A549 (cell line): ENCODE measurements at regions of chr9 and their contacts with region 1.

Region 1: DNA sequence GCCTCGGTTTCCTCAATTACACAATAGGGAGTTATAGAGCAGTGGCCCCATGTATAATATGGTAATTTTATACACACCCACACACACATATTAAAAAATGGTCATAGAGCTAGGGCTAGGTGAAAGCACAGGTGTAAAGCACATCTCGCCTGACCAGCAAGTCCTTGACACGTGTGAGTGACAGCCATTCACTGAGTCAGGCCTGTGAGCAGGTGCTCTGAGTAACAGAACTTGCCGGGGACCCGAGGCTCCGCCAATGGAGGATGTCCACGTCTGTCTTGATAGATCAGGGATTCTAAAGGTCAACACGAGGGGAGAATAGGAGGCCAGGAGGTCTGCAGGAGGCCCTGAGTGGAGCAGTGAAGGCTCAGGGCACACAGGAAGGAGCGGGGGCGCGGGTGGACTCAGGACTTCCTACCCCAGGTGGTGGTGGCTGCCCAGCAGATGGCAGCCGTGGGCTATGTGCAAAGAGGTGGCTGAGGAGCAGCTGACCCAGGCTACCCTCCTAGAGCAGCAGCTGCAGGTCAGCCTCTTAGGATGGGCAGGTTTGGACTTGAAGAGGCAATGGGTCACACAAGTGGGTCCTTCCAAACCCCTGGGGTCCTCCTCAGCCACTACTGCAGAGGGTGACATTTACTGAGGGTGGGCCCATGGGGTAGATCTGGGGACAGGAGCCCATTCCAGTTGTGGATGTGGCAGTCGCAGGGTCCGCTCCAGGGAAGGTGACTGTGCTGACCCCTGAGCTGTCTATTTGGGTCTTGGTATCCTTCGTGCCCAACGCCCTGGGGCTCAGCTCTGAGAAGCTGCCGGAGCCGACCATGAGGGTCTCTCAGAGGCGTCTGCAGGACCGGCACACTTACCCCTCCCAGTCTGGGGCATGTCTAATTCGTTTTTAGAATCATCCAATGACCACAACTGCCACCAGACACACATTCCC is 45.9 kb downstream of the PRRT1B start:
- DNase-seq: peak; percentile 77 to 80
- ATAC-seq: peak; percentile 90 to 96
- H3K4me3 ChIP-seq: no peak overlapping the region
- H3K27ac ChIP-seq: no peak overlapping the region
- H3K4me1 ChIP-seq: peaks cover 22% of the 10 kb centered on the region
- CTCF ChIP-seq: peak; percentile 91
- EP300 ChIP-seq: no peak
- POLR2A ChIP-seq: no peak
- RAD21 ChIP-seq: peak; percentile 98 to 99

Region 2: GRCh38 chr9:131603199-131603598 is 12.0 kb after region 1 on chr9:
- CTCF ChIA-PET with region 1: interaction called, 60 read pairs
- POLR2A ChIA-PET with region 1: no interaction called
- DNase-seq: no peak
- ATAC-seq: no peak
- H3K4me3 ChIP-seq: no peak overlapping the region
- H3K27ac ChIP-seq: no peak overlapping the region
- H3K4me1 ChIP-seq: peaks cover 26% of the 10 kb centered on the region
- CTCF ChIP-seq: no peak
- EP300 ChIP-seq: no peak
- POLR2A ChIP-seq: no peak
- RAD21 ChIP-seq: no peak

Region 3: GRCh38 chr9:131635285-131635684 is 44.1 kb after region 1 on chr9:
- CTCF ChIA-PET with region 1: interaction called, 13 read pairs
- POLR2A ChIA-PET with region 1: no interaction called
- DNase-seq: peak; percentile 89 to 90
- ATAC-seq: peak; percentile 99
- H3K4me3 ChIP-seq: no peak overlapping the region
- H3K27ac ChIP-seq: peak overlapping the region; percentile 63 to 78
- H3K4me1 ChIP-seq: peaks cover 18% of the 10 kb centered on the region
- CTCF ChIP-seq: no peak
- EP300 ChIP-seq: no peak
- POLR2A ChIP-seq: no peak
- RAD21 ChIP-seq: peak in 1 of 2 experiments; percentile 22; a peak in 1 of 5 replicates

Region 4: DNA sequence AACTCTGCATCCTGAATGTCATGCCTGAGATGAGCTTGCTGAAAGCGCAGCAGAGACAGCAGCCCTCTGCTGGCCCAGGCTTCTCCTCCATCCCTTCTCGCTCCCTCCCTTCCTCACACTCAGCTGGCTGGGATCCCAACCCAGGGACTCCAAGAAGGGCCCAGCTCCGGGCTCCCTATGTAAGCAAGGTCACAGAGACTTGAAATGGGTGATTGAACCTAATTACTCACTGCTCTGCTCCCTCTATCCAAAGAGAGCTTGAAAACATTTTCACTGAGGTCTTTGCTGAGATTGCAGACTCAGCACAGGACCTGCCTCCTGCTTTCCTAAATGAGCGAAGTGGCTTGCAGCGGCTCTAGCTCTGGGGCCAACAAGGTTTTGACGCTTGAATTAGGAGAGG is 105.9 kb after region 1 on chr9:
- CTCF ChIA-PET with region 1: interaction called, 11 read pairs
- POLR2A ChIA-PET with region 1: no interaction called
- DNase-seq: no peak
- ATAC-seq: peak in 1 of 2 experiments; percentile 63; a peak in 3 of 6 replicates
- H3K4me3 ChIP-seq: no peak overlapping the region
- H3K27ac ChIP-seq: no peak overlapping the region
- H3K4me1 ChIP-seq: peaks cover 13% of the 10 kb centered on the region
- CTCF ChIP-seq: no peak
- EP300 ChIP-seq: no peak
- POLR2A ChIP-seq: no peak
- RAD21 ChIP-seq: no peak

Region 5: DNA sequence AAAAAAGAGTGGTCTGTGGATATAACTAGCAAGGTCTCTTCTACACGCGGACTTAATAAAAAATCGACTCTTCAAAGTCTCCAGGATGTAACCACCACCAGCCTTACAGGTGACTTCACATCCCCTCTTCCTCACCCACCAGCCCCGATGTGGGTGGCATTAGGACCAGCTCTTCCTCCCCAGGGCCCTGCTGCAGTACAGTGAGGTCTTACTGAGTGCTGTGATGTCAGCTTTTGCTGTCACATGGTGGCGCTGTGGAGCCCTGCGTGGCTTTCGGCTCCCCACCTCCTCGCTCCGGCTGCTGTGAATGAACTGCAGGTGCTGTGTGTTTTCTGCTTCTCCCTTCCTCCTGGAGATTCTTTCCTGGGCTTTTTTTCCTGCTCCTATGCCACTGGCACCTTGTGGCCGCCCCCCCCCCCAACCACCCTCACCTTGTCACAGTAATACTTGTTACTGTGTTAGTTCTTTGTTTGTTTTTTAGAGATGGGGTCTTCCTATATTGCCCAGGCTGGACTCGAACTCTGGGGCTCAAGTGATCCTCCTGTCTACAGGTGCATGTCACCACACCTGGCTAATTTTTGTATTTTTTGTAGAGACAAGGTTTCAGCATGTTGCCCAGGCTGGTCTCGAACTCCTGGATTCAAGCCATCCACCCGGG is 164.5 kb after region 1 on chr9:
- CTCF ChIA-PET with region 1: interaction called, 737 read pairs
- POLR2A ChIA-PET with region 1: no interaction called
- DNase-seq: peak; percentile 71 to 81
- ATAC-seq: peak; percentile 97 to 98
- H3K4me3 ChIP-seq: no peak overlapping the region
- H3K27ac ChIP-seq: no peak overlapping the region
- H3K4me1 ChIP-seq: peaks cover 6% of the 10 kb centered on the region; the same call in 1 of the 3 replicates
- CTCF ChIP-seq: peak; percentile 84
- EP300 ChIP-seq: no peak
- POLR2A ChIP-seq: no peak
- RAD21 ChIP-seq: peak; percentile 61 to 67